Vagina (tissue), 2 donors: ENCODE measurements at regions of chr1 and their contacts with region 1.

Region 1: GRCh38 chr1:205711104-205712020 is 31.1 kb upstream of the SLC45A3 start:
- DNase-seq: no peak
- H3K4me3 ChIP-seq: no peak overlapping the region
- H3K27ac ChIP-seq: no peak overlapping the region
- H3K4me1 ChIP-seq: peaks cover 16% of the 10 kb centered on the region
- H3K27me3 ChIP-seq: no peaks in the 10 kb centered on the region
- CTCF ChIP-seq: peak in 2 of 3 experiments; percentile 70 to 74
- POLR2A ChIP-seq: no peak

Region 2: GRCh38 chr1:205664376-205665108 is 46.8 kb before region 1 on chr1:
- intact Hi-C with region 1: loop called (anchors 5 kb)
- DNase-seq: no peak
- H3K4me3 ChIP-seq: no peak overlapping the region
- H3K27ac ChIP-seq: no peak overlapping the region
- H3K4me1 ChIP-seq: peaks cover 12% of the 10 kb centered on the region
- H3K27me3 ChIP-seq: no peaks in the 10 kb centered on the region
- CTCF ChIP-seq: no peak
- POLR2A ChIP-seq: no peak